Sigmoid colon (tissue), 7 donors: ENCODE measurements at regions of chr21 and their contacts with region 1.

Region 1: GRCh38 chr21:32612075-32612998 is at the start of gene CFAP298:
- DNase-seq: peak; percentile 91
- H3K4me3 ChIP-seq: peak within 1 kb of the TSS; percentile 61 to 96 (median 80)
- H3K27ac ChIP-seq: peak within 1 kb of the TSS; percentile 79 to 88 (median 86)
- H3K4me1 ChIP-seq: peaks cover 0 to 18% (median 14%) of the 10 kb centered on the region in 4 donors
- H3K27me3 ChIP-seq: no peaks in the 10 kb centered on the region
- CTCF ChIP-seq: no peak
- EP300 ChIP-seq: no peak
- POLR2A ChIP-seq: no peak
- total RNA-seq, gene CFAP298: 14.4 to 33.8 (median 24.2) TPM

Region 2: GRCh38 chr21:31731802-31732596 is 880.3 kb before region 1 on chr21 and contains the start of gene SCAF4:
- intact Hi-C with region 1: loop called (anchors 5 kb)
- DNase-seq: peak; percentile 94
- H3K4me3 ChIP-seq: peak within 1 kb of the TSS; percentile 76 to 99 (median 96)
- H3K27ac ChIP-seq: peak within 1 kb of the TSS; percentile 98 to 99 (median 98)
- H3K4me1 ChIP-seq: peaks cover 3 to 53% (median 43%) of the 10 kb centered on the region in 4 donors
- H3K27me3 ChIP-seq: no peaks in the 10 kb centered on the region
- CTCF ChIP-seq: no peak
- EP300 ChIP-seq: no peak
- POLR2A ChIP-seq: peak; percentile 74 to 78
- total RNA-seq, gene SCAF4: 9.6 to 19.1 (median 13.7) TPM

Region 3: GRCh38 chr21:32240851-32241687 is 371.3 kb before region 1 on chr21:
- intact Hi-C with region 1: no loop called
- DNase-seq: no peak
- H3K4me3 ChIP-seq: no peak overlapping the region
- H3K27ac ChIP-seq: peak overlapping the region; percentile 11 to 77 (median 56)
- H3K4me1 ChIP-seq: peaks cover 0 to 7% (median 5%) of the 10 kb centered on the region in 4 donors
- H3K27me3 ChIP-seq: no peaks in the 10 kb centered on the region
- CTCF ChIP-seq: no peak
- EP300 ChIP-seq: no peak
- POLR2A ChIP-seq: no peak

Region 4: DNA sequence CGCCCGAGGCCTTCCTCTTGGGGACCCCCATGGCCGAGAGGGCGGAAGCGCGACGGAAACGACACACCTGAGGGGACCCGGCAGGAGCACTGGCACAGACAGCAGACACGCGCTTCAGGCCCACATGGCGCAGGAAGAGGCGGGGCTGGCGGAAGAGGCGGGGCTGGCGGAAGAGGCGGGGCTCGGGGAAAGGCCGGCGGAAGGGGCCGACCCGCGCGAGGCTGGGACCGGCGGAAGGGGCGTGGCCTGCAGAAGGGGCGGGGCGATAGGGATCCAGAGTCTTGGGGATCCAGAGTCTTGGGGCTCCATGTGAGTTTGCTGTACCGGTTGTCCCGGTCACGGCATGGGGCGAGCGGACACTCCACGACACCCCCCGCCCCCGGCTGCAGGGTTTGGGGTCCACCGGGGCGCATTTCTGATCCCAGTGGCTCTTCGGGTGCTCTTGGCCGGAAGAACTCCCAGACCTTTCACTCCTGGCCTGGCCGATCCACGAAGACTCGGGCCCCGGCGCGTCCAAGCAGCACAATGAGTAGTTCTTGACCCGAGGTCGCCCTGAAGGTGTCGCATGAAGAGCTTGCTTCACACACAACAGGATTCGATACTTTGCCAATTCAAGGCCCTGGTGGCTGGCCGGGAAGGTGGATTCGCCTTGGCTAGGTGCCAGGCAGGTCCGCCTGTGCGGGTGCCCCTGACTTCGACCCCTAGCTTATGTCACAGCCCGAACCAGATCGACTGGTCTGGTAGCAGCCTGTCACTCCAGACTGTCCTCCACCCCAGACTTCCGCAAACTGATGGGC is 219.3 kb before region 1 on chr21 and contains the start of gene URB1:
- intact Hi-C with region 1: loop called (anchors 5 kb)
- DNase-seq: peak; percentile 94
- H3K4me3 ChIP-seq: peak within 1 kb of the TSS; percentile 76 to 96 (median 86)
- H3K27ac ChIP-seq: peak within 1 kb of the TSS; percentile 84 to 87 (median 86)
- H3K4me1 ChIP-seq: peaks cover 0 to 37% (median 17%) of the 10 kb centered on the region in 4 donors
- H3K27me3 ChIP-seq: no peaks in the 10 kb centered on the region
- CTCF ChIP-seq: no peak
- EP300 ChIP-seq: no peak
- POLR2A ChIP-seq: peak; percentile 60 to 73
- total RNA-seq, gene URB1: 7.5 to 16.7 (median 11.5) TPM

Region 5: GRCh38 chr21:32457360-32457840 is 154.9 kb before region 1 on chr21:
- intact Hi-C with region 1: no loop called
- DNase-seq: no peak
- H3K4me3 ChIP-seq: no peak overlapping the region
- H3K27ac ChIP-seq: peak overlapping the region; percentile 69 to 84 (median 74)
- H3K4me1 ChIP-seq: peaks cover 0 to 27% (median 25%) of the 10 kb centered on the region in 4 donors
- H3K27me3 ChIP-seq: no peaks in the 10 kb centered on the region
- CTCF ChIP-seq: no peak
- EP300 ChIP-seq: no peak
- POLR2A ChIP-seq: no peak

Region 6: GRCh38 chr21:32562426-32562825 is 49.9 kb before region 1 on chr21:
- intact Hi-C with region 1: no loop called
- DNase-seq: no peak
- H3K4me3 ChIP-seq: no peak overlapping the region
- H3K27ac ChIP-seq: peak overlapping the region in 1 of 4 donors; percentile 21
- H3K4me1 ChIP-seq: no peaks in the 10 kb centered on the region
- H3K27me3 ChIP-seq: no peaks in the 10 kb centered on the region
- CTCF ChIP-seq: no peak
- EP300 ChIP-seq: no peak
- POLR2A ChIP-seq: no peak